ENCODE measurements at regions of chr11 and their contacts with region 1.

Region 1: DNA sequence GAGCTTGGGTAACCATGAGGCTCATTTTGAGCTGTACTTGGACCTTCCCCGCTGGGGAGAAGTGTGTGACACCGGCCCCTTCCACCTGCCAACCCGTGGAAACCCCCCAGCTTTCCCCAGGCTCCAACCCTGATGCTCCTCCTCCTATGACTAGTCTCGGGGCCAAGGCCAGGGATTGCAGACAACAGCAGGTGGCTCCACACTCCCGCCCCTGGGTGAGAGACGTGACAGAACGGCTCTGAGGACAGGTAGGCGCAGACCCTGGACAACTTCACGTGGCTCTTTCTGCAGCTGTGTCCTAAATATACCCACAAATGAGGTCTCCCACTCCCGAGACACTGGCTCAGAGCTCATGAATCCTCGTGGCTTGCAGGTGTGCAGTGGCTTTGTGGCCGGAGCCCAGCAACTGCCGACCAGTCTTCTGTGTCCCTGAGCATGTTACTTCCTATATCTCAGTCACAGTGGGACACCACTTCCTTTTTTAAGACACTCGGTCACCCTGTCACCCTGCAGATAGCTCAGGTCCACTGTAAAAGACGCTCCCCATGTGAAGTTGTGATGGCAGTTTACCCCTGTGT is 55.2 kb downstream of the NECTIN1 start:
- DNase-seq: no peak
- ATAC-seq: no peak
- H3K4me3 ChIP-seq: no peak overlapping the region
- H3K27ac ChIP-seq: peak overlapping the region in 1 of 12 donors; percentile 54
- H3K4me1 ChIP-seq: peaks cover 0 to 33% (median 21%) of the 10 kb centered on the region in 12 donors
- H3K27me3 ChIP-seq: no peaks in the 10 kb centered on the region
- CTCF ChIP-seq: no peak
- POLR2A ChIP-seq: no peak

Region 2: DNA sequence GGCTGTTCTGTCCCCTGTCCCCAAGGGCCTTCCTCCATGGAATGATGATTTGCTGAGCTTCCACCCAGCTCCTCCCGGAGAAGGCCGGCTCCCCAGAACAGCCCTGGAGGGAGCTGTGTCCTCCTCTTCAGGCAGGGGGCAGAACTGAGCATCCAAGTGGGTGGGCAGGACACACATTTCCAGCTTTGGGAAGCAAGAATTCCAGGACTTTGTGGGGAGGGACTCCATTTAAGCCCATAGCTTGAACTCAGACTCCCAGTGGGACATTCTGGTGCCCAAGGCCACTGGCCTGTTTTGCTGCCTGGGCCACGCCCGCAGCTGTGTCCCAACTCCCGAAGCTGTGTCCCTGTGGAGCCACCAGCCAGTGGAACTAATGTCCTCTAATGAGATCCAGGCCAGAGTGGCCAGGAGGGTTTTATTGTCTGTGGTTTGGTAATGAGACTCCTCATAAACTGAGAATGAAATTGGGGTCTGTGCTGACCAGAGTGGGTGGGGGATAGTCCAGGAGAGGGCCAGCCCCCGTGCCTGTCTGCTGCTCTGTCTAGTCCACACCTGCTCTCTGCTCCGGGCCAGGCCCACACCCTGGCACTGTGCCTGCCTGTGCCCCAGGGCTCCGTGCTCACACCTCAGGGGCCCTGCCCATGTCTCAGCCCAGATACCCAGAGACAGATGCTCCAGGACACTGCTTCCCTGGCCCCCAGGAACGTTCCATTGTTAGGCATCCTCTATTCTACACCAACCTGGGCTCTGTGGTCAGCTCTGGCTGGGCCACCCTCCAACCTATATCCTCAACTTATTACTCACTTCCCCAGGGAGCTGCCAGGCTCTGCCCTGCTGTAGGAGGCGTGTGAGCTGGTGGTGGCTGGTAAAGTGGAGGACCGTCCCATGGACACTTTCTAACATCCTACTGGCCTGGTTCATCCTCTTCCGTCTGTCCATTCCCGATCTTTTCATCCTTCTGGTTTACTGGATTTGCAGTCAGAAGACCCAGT is 47.6 kb after region 1 on chr11:
- intact Hi-C with region 1: loop called in 2 of 10 experiments (anchors 5 kb)
- DNase-seq: peak in 4 of 5 donors; percentile 50 to 60 (median 54)
- ATAC-seq: peak; percentile 57 to 72 (median 60)
- H3K4me3 ChIP-seq: no peak overlapping the region
- H3K27ac ChIP-seq: peak overlapping the region in 1 of 12 donors; percentile 18
- H3K4me1 ChIP-seq: peaks cover 0 to 14% (median 3%) of the 10 kb centered on the region in 12 donors
- H3K27me3 ChIP-seq: no peaks in the 10 kb centered on the region
- CTCF ChIP-seq: peak; percentile 19 to 68 (median 47)
- POLR2A ChIP-seq: no peak

Region 3: DNA sequence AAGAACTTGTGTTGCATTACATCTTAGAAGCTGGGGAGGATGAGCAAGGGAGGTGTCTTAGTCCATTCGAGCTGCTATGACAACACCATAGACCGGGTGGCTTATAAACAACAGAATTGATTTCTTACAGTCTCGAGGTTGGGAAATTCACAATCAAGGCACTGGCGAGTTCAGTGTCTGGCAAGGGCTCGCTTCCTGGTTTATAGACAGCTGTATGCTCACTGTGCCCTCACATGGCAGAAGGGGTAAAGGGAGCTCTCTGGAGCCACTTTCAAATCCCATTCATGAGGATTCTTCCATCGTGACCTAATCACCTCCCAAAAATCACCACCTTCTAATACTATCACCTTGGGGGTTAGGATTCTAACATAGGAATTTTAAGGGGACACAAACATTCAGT is 205.1 kb after region 1 on chr11:
- intact Hi-C with region 1: loop called in 1 of 10 experiments (anchors 10 kb)
- DNase-seq: no peak
- ATAC-seq: peak; percentile 35 to 69 (median 68)
- H3K4me3 ChIP-seq: no peak overlapping the region
- H3K27ac ChIP-seq: no peak overlapping the region
- H3K4me1 ChIP-seq: peaks cover 0 to 11% (median 0%) of the 10 kb centered on the region in 12 donors
- H3K27me3 ChIP-seq: peaks cover 0 to 24% (median 0%) of the 10 kb centered on the region in 9 donors
- CTCF ChIP-seq: peak in 7 of 12 donors; percentile 12 to 38 (median 23)
- POLR2A ChIP-seq: no peak

Region 4: GRCh38 chr11:120013325-120014270 is 339.8 kb after region 1 on chr11:
- intact Hi-C with region 1: loop called in 8 of 10 experiments (anchors 5 to 10 kb)
- DNase-seq: peak in 4 of 5 donors; percentile 37 to 57 (median 48)
- ATAC-seq: peak; percentile 74 to 92 (median 79)
- H3K4me3 ChIP-seq: no peak overlapping the region
- H3K27ac ChIP-seq: no peak overlapping the region
- H3K4me1 ChIP-seq: peaks cover 0 to 6% (median 0%) of the 10 kb centered on the region in 12 donors
- H3K27me3 ChIP-seq: peaks cover 0 to 72% (median 10%) of the 10 kb centered on the region in 9 donors
- CTCF ChIP-seq: peak; percentile 44 to 78 (median 67)
- POLR2A ChIP-seq: no peak